ENCODE measurements at regions of chr5 and their contacts with region 1.

Region 1: DNA sequence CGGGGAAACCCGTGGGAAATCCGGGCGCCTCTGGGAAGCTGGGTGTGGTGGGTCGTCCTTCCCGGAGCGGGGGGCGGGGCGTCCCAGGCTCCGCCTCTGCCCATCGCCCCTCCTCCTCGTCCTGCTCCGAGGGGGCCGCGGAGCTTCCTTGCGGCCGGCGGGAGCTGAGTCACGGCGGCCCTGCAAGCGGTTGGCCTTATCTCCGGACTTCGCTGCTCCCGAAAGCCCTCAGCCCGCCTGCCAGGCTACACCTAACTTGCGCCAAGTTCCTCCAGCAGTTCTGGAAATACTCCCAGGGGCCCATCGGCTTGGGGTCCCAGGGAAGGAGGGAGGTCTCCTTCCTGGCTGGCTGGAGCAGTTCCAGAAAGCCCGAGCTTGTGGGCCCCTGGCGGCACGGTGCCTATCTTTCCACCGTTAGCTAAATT is 54.1 kb upstream of the CDKN2AIPNL start:
- DNase-seq: peak; percentile 89 to 95 (median 93)
- ATAC-seq: peak; percentile 81 to 90 (median 88)
- H3K4me3 ChIP-seq: peak overlapping the region; percentile 4 to 74 (median 60)
- H3K27ac ChIP-seq: peak overlapping the region; percentile 95 to 100 (median 98)
- H3K4me1 ChIP-seq: peaks cover 3 to 41% (median 30%) of the 10 kb centered on the region in 12 donors
- H3K27me3 ChIP-seq: no peaks in the 10 kb centered on the region
- CTCF ChIP-seq: no peak
- POLR2A ChIP-seq: peak in 1 of 2 donors; percentile 81

Region 2: GRCh38 chr5:134073404-134073803 is 392.4 kb before region 1 on chr5:
- intact Hi-C with region 1: no loop called
- DNase-seq: no peak
- ATAC-seq: no peak
- H3K4me3 ChIP-seq: no peak overlapping the region
- H3K27ac ChIP-seq: no peak overlapping the region
- H3K4me1 ChIP-seq: peaks cover 0 to 10% (median 7%) of the 10 kb centered on the region in 12 donors
- H3K27me3 ChIP-seq: peaks cover 0 to 22% (median 0%) of the 10 kb centered on the region in 9 donors
- CTCF ChIP-seq: no peak
- POLR2A ChIP-seq: no peak

Region 3: GRCh38 chr5:134411546-134412266 is 54.1 kb before region 1 on chr5 and contains the start of gene CDKN2AIPNL:
- intact Hi-C with region 1: loop called in 6 of 10 experiments (anchors 1 to 5 kb)
- DNase-seq: peak; percentile 92 to 97 (median 94)
- ATAC-seq: peak; percentile 97 to 100 (median 99)
- H3K4me3 ChIP-seq: peak within 1 kb of the TSS; percentile 62 to 98 (median 76)
- H3K27ac ChIP-seq: peak within 1 kb of the TSS; percentile 69 to 97 (median 90)
- H3K4me1 ChIP-seq: peaks cover 0 to 37% (median 22%) of the 10 kb centered on the region in 12 donors
- H3K27me3 ChIP-seq: no peaks in the 10 kb centered on the region
- CTCF ChIP-seq: peak; percentile 68 to 95 (median 78)
- POLR2A ChIP-seq: peak in 1 of 2 donors; percentile 72
- total RNA-seq, gene CDKN2AIPNL: 26.6 to 38.4 (median 32.3) TPM

Region 4: DNA sequence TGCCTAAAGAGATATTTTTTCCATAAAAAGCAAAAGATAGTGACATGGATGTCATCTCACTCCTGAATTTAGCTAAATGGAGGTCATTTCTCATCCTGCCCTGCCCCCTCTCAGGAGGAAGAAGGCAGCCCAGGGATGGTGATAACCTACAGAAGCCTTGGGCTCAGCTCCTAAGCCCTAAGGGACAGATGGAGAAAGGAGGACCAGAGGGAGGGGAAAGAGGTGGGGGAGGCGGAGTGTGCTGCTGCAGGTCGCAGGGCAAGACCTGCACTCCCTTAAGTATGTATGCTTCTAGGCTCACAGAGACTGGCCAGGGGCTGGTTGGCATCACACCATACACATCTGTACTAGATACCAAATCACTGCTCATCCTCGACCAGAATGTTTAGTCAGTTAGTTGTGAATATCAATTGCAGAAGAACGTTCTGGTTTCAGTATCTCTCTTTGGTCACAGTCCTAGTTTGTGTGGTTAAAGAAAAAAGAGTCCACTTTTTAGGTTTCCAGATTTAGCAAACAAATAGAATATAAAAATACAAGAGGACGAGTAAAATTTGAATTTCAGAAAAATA is 35.7 kb before region 1 on chr5:
- intact Hi-C with region 1: no loop called
- DNase-seq: no peak
- ATAC-seq: no peak
- H3K4me3 ChIP-seq: no peak overlapping the region
- H3K27ac ChIP-seq: no peak overlapping the region
- H3K4me1 ChIP-seq: no peaks in the 10 kb centered on the region
- H3K27me3 ChIP-seq: no peaks in the 10 kb centered on the region
- CTCF ChIP-seq: no peak
- POLR2A ChIP-seq: no peak

Region 5: GRCh38 chr5:134503088-134503946 is 37.5 kb after region 1 on chr5:
- intact Hi-C with region 1: loop called in 9 of 10 experiments (anchors 1 to 5 kb)
- DNase-seq: peak; percentile 62 to 89 (median 69)
- ATAC-seq: peak; percentile 16 to 81 (median 78)
- H3K4me3 ChIP-seq: no peak overlapping the region
- H3K27ac ChIP-seq: peak overlapping the region; percentile 8 to 86 (median 76)
- H3K4me1 ChIP-seq: peaks cover 5 to 42% (median 27%) of the 10 kb centered on the region in 12 donors
- H3K27me3 ChIP-seq: no peaks in the 10 kb centered on the region
- CTCF ChIP-seq: no peak
- POLR2A ChIP-seq: peak in 1 of 2 donors; percentile 57

Region 6: DNA sequence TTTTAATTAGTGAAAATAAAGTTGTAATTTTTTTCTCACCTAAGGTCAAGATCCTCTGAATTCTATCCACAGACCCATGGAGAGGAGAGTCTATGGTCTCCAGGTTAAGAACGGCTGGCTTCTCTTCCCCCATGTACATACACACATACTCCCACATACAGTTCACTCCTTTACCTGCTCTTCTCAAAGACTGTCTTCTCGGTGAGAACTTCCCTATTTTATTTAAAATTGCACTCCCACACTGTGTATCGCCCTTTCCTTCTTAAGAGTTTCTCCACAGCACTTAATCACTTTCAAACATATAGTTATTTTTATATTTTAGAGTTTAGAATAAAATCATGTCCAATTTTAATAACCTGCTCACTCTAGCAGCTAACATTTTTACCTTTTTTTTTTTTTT is 56.0 kb after region 1 on chr5:
- intact Hi-C with region 1: loop called in 9 of 10 experiments (anchors 1 to 5 kb)
- DNase-seq: no peak
- ATAC-seq: no peak
- H3K4me3 ChIP-seq: no peak overlapping the region
- H3K27ac ChIP-seq: no peak overlapping the region
- H3K4me1 ChIP-seq: peaks cover 0 to 14% (median 0%) of the 10 kb centered on the region in 12 donors
- H3K27me3 ChIP-seq: no peaks in the 10 kb centered on the region
- CTCF ChIP-seq: no peak
- POLR2A ChIP-seq: no peak